ENCODE measurements at regions of chr1 and their contacts with region 1.

Region 1: DNA sequence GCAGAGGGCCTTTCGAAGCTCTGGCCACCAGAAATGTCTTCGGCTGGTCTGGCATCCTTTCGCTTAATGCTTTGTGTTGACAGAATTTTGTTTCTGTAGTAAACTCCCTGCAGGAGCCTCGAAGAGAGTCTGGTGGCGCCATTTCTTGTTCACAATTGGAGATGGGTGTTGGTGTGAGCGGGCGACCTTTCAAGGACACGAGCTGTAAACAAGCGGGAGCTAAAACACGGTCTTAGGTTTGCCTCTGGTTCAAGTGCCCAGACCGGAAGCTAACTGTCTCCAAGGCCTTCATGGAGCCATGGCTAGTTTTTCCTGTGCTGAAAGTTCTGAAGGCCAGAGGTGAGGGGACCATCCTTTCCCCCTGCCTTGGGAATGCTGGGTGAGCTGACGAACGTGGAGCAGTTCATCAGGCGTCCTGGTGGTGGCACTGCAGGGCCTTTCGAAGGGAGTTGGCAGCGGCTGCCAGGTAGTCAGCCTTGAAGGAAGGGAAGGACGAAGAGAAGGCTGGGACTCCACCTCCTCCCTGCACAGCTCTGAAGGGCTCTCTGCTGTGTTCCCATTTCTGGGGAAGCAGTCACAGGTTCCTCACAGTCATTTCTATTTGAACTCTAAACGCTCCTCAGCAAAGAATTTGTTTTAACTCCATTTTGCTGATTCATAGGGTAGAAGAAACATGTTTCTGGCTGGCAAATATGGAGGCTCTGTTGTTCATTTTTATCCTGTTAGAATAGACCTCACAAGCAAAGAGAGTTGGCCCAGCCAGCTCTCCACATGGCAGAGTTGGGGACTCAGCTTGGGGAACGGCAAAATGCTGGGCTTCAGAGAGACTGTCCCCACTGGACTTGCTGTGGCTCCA is 35.2 kb downstream of the URB2 start:
- DNase-seq: peak; percentile 83
- H3K4me3 Mint-ChIP-seq: no peak overlapping the region
- H3K27ac Mint-ChIP-seq: no peak overlapping the region
- H3K4me1 Mint-ChIP-seq: peaks cover 19% of the 10 kb centered on the region
- H3K27me3 Mint-ChIP-seq: no peaks in the 10 kb centered on the region

Region 2: GRCh38 chr1:229440851-229441537 is 220.3 kb before region 1 on chr1:
- CTCF ChIA-PET with region 1: interaction called, 3 read pairs
- POLR2A ChIA-PET with region 1: no interaction called
- intact Hi-C with region 1: loop called (anchors 1 kb)
- DNase-seq: no peak
- H3K4me3 Mint-ChIP-seq: no peak overlapping the region
- H3K27ac Mint-ChIP-seq: peak overlapping the region; percentile 56
- H3K4me1 Mint-ChIP-seq: peaks cover 22% of the 10 kb centered on the region
- H3K27me3 Mint-ChIP-seq: peaks cover 17% of the 10 kb centered on the region

Region 3: GRCh38 chr1:229495782-229496181 is 165.5 kb before region 1 on chr1:
- CTCF ChIA-PET with region 1: no interaction called
- POLR2A ChIA-PET with region 1: no interaction called
- intact Hi-C with region 1: no loop called
- DNase-seq: no peak
- H3K4me3 Mint-ChIP-seq: no peak overlapping the region
- H3K27ac Mint-ChIP-seq: no peak overlapping the region
- H3K4me1 Mint-ChIP-seq: no peaks in the 10 kb centered on the region
- H3K27me3 Mint-ChIP-seq: no peaks in the 10 kb centered on the region

Region 4: DNA sequence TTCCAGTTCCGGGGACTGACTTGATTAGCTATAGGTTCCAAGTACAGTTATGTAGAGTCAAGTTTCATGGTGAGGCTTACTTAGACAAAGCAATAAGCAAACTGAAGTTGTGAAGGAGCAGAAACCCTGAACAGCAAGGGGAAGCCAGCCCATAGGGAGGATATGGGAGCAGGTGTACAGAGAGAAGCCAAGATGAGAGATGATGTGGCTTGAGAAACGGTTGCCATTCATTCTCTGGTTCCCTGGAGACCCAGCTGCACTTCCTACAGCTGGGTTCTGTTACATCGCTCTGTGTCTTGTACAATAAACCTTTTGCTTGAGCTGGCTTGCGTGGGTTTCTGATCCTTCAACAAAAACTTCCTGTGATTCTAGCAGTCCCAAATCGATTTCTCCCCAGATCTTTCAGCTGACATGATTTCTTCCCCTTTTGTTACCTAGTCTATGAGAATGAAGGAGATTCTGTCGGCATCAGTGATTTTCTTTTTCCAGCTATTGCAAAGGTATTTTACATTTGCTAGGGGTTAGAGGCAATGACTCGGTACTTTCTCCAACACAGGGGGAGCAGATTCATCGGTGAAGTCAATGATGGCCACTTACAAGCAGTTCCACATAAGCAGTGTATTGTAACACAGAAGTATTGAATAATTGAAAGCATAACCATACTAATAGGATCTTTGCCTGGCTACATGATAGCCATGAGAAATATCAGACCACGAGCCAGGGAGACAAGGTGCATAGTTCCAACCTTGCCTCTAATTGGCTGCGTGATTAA is 32.1 kb after region 1 on chr1:
- CTCF ChIA-PET with region 1: no interaction called
- POLR2A ChIA-PET with region 1: no interaction called
- intact Hi-C with region 1: loop called (anchors 2 kb)
- DNase-seq: no peak
- H3K4me3 Mint-ChIP-seq: no peak overlapping the region
- H3K27ac Mint-ChIP-seq: no peak overlapping the region
- H3K4me1 Mint-ChIP-seq: peaks cover 9% of the 10 kb centered on the region
- H3K27me3 Mint-ChIP-seq: peaks cover 23% of the 10 kb centered on the region

Region 5: GRCh38 chr1:230073371-230074035 is 412.3 kb after region 1 on chr1:
- CTCF ChIA-PET with region 1: no interaction called
- POLR2A ChIA-PET with region 1: no interaction called
- intact Hi-C with region 1: loop called (anchors 10 kb)
- DNase-seq: no peak
- H3K4me3 Mint-ChIP-seq: no peak overlapping the region
- H3K27ac Mint-ChIP-seq: no peak overlapping the region
- H3K4me1 Mint-ChIP-seq: peaks cover 66% of the 10 kb centered on the region
- H3K27me3 Mint-ChIP-seq: no peaks in the 10 kb centered on the region

Region 6: GRCh38 chr1:230109895-230110667 is 448.8 kb after region 1 on chr1:
- CTCF ChIA-PET with region 1: interaction called, 3 read pairs
- POLR2A ChIA-PET with region 1: no interaction called
- intact Hi-C with region 1: loop called (anchors 1 kb)
- DNase-seq: peak; percentile 92
- H3K4me3 Mint-ChIP-seq: peak overlapping the region; percentile 20
- H3K27ac Mint-ChIP-seq: peak overlapping the region; percentile 86
- H3K4me1 Mint-ChIP-seq: peaks cover 87% of the 10 kb centered on the region
- H3K27me3 Mint-ChIP-seq: no peaks in the 10 kb centered on the region

Region 7: GRCh38 chr1:230208619-230209261 is 547.5 kb after region 1 on chr1:
- CTCF ChIA-PET with region 1: interaction called, 3 read pairs
- POLR2A ChIA-PET with region 1: no interaction called
- intact Hi-C with region 1: loop called (anchors 2 kb)
- DNase-seq: peak; percentile 74
- H3K4me3 Mint-ChIP-seq: peak overlapping the region; percentile 41
- H3K27ac Mint-ChIP-seq: peak overlapping the region; percentile 92
- H3K4me1 Mint-ChIP-seq: peaks cover 50% of the 10 kb centered on the region
- H3K27me3 Mint-ChIP-seq: no peaks in the 10 kb centered on the region